Heart right ventricle (tissue), 16 donors: ENCODE measurements at regions of chr13 and their contacts with region 1.

Region 1: DNA sequence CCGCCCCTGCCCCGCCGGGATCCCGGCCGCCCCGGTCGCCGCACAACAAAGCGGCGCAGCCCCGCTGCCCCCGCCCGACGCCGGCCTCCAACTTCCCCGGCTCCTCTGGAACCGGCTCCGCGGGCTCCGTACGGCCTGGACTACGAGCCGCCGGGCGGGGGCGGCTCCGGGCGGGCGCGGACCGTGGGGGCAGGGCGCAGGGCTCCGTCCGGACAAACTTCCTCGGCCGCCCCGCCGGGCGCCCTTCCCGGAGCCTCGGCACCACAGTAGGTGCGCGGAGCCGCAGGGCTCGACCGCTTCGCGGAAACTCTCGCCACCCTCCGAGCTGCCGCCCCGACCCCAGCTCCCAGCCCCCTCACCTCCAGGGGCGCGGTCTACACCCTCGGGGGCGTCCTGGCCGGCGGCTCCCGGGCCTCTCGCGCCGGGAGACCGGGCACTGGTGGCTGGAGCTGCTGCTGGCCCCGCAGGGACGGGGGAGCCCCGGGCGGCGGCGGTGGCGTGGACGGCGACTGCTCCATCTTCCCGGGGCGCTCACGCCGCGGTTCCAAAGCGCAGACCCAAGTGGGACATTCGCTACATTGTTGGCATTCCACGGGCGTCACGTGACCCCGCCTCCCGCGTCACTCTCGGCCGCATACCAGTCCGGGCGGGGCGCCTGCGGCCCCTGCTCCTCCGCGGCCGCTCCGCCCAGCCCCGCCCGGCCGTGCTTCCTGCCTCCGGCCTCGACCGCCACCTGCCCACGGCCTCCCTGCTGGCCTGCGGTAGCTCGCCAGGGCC is at the start of gene LATS2:
- DNase-seq: peak; percentile 97
- ATAC-seq: peak; percentile 94 to 99 (median 98)
- H3K4me3 ChIP-seq: peak within 1 kb of the TSS; percentile 72 to 100 (median 98)
- H3K27ac ChIP-seq: peak within 1 kb of the TSS; percentile 96 to 100 (median 100)
- H3K4me1 ChIP-seq: peaks cover 6 to 55% (median 45%) of the 10 kb centered on the region in 9 donors
- H3K27me3 ChIP-seq: no peaks in the 10 kb centered on the region
- CTCF ChIP-seq: peak in 8 of 9 donors; percentile 13 to 68 (median 38)
- total RNA-seq, gene LATS2: 16.2 to 46.1 (median 27.9) TPM

Region 2: DNA sequence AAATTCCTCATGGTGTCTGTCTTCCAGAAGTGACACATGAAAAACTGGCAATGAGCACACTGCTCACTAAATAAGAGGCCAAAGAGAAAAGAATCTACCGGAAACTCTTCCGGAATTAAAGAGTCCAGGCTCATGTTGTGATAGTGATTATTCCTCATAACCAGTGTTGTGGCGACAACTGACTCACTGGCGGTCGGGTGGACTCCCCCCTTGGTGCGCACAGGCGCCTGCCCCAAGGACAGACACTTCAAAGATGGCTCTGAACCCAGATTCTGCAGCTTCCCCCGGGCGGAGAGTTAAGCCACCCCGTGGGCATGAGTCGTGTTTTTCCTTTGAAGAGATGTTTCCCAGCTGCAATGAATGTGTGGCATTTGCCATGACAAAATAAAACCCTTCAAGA is 347.4 kb before region 1 on chr13:
- intact Hi-C with region 1: no loop called
- DNase-seq: no peak
- ATAC-seq: peak in 7 of 8 donors; percentile 24 to 57 (median 41)
- H3K4me3 ChIP-seq: peak overlapping the region in 1 of 10 donors; percentile 40
- H3K27ac ChIP-seq: peak overlapping the region; percentile 42 to 88 (median 75)
- H3K4me1 ChIP-seq: peaks cover 3 to 40% (median 24%) of the 10 kb centered on the region in 9 donors
- H3K27me3 ChIP-seq: no peaks in the 10 kb centered on the region
- CTCF ChIP-seq: no peak

Region 3: GRCh38 chr13:20989656-20990321 is 71.4 kb before region 1 on chr13:
- intact Hi-C with region 1: loop called in 3 of 10 experiments (anchors 10 kb)
- DNase-seq: no peak
- ATAC-seq: peak in 1 of 8 donors; percentile 17
- H3K4me3 ChIP-seq: no peak overlapping the region
- H3K27ac ChIP-seq: peak overlapping the region in 6 of 10 donors; percentile 39 to 57 (median 48)
- H3K4me1 ChIP-seq: peaks cover 0 to 16% (median 8%) of the 10 kb centered on the region in 9 donors
- H3K27me3 ChIP-seq: no peaks in the 10 kb centered on the region
- CTCF ChIP-seq: no peak

Region 4: DNA sequence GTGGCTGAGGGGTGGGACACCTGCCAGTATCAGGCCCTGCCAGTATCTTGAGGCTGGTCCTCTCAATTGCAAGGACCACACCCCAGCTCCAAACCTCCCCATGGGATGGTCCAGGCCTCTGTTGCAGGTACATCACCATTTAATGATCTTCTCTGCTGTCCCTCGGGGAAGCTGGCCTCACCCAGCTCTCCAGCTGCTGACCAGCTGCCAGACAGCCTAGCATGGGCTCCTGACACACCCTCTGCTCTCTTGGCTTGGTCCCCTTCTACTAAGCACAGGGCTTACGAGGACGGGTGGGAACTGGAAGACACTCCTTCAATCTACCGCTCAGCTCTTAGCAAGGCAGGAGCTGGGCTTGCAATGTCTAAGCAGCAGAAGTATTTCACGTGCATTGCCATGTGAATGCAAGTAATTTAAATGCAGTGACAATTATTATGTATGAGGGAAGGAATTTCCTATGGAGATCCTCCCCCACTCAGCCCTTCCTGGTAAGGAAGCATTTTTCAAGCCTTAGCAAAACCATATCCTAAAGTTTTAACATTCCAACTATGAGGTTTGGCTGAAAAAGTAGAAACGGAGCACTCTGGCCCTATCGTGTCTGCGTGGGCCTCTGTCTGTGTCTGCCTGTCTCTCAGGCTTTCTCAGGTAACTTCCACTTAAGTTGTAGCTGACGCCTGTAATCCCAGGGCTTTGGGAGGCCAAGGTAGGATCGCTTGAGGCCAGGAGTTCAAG is 63.6 kb before region 1 on chr13:
- intact Hi-C with region 1: loop called in 2 of 10 experiments (anchors 10 kb)
- DNase-seq: peak in 1 of 2 donors; percentile 36
- ATAC-seq: peak in 7 of 8 donors; percentile 57 to 85 (median 75)
- H3K4me3 ChIP-seq: no peak overlapping the region
- H3K27ac ChIP-seq: peak overlapping the region in 8 of 10 donors; percentile 12 to 78 (median 56)
- H3K4me1 ChIP-seq: peaks cover 6 to 53% (median 26%) of the 10 kb centered on the region in 9 donors
- H3K27me3 ChIP-seq: no peaks in the 10 kb centered on the region
- CTCF ChIP-seq: no peak

Region 5: GRCh38 chr13:21034603-21035191 is 26.5 kb before region 1 on chr13:
- intact Hi-C with region 1: loop called in 1 of 10 experiments (anchors 2 kb)
- DNase-seq: peak; percentile 37 to 50
- ATAC-seq: peak; percentile 59 to 81 (median 74)
- H3K4me3 ChIP-seq: no peak overlapping the region
- H3K27ac ChIP-seq: peak overlapping the region; percentile 52 to 86 (median 76)
- H3K4me1 ChIP-seq: peaks cover 18 to 91% (median 79%) of the 10 kb centered on the region in 9 donors
- H3K27me3 ChIP-seq: no peaks in the 10 kb centered on the region
- CTCF ChIP-seq: peak; percentile 6 to 68 (median 48)